Naive thymus-derived CD4-positive, alpha-beta T cell (primary cell): ENCODE measurements at regions of chr1 and their contacts with region 1.

Region 1: GRCh38 chr1:157490467-157491165 is 61.7 kb downstream of the FCRL5 start:
- DNase-seq: peak in 5 of 9 donors; percentile 18 to 63 (median 31)
- ATAC-seq: peak; percentile 56
- H3K4me3 ChIP-seq: no peak overlapping the region
- H3K4me3 Mint-ChIP-seq: no peak overlapping the region
- H3K27ac ChIP-seq: no peak overlapping the region
- H3K27ac Mint-ChIP-seq: no peak overlapping the region
- H3K4me1 ChIP-seq: no peaks in the 10 kb centered on the region
- H3K4me1 Mint-ChIP-seq: no peaks in the 10 kb centered on the region
- H3K27me3 ChIP-seq: no peaks in the 10 kb centered on the region
- H3K27me3 Mint-ChIP-seq: peaks cover 5 to 34% (median 16%) of the 10 kb centered on the region in 5 donors

Region 2: DNA sequence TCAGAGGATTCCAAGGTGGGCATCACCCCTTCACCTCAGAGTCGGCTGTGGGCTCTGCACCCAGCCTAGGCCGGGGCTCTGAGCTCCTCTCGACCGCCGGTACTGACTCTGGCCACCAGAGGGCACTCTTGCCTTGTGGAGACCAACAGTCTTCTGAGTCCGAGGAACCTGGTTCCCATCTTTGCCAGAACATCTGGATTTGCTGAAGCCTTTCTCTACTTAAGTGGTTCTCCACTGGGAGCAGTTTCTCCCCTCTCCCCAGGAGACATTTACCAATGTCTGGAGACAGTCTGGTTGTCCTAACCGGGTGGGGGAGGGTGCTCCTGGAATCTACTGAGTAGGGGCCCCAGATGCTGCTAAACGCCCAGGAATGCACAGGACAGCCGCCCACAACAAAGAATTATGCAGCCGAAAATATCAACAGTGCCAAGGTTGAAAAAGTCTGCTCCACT is 400.4 kb before region 1 on chr1:
- CTCF ChIA-PET with region 1: no interaction called
- POLR2A ChIA-PET with region 1: no interaction called
- intact Hi-C with region 1: loop called in 1 of 2 experiments (anchors 10 kb)
- DNase-seq: peak; percentile 64 to 88 (median 81)
- ATAC-seq: peak; percentile 91
- H3K4me3 ChIP-seq: no peak overlapping the region
- H3K4me3 Mint-ChIP-seq: no peak overlapping the region
- H3K27ac ChIP-seq: no peak overlapping the region
- H3K27ac Mint-ChIP-seq: no peak overlapping the region
- H3K4me1 ChIP-seq: peaks cover 0 to 4% of the 10 kb centered on the region in 2 donors
- H3K4me1 Mint-ChIP-seq: peaks cover 0 to 8% (median 0%) of the 10 kb centered on the region in 7 donors
- H3K27me3 ChIP-seq: no peaks in the 10 kb centered on the region
- H3K27me3 Mint-ChIP-seq: peaks cover 0 to 11% (median 0%) of the 10 kb centered on the region in 5 donors

Region 3: GRCh38 chr1:157163273-157164127 is 327.1 kb before region 1 on chr1:
- CTCF ChIA-PET with region 1: no interaction called
- POLR2A ChIA-PET with region 1: no interaction called
- intact Hi-C with region 1: loop called in 1 of 2 experiments (anchors 2 kb)
- DNase-seq: peak; percentile 38 to 77 (median 60)
- ATAC-seq: peak; percentile 78
- H3K4me3 ChIP-seq: no peak overlapping the region
- H3K4me3 Mint-ChIP-seq: peak overlapping the region in 6 of 10 donors; percentile 4 to 54 (median 42)
- H3K27ac ChIP-seq: no peak overlapping the region
- H3K27ac Mint-ChIP-seq: peak overlapping the region in 1 of 9 donors; percentile 56
- H3K4me1 ChIP-seq: no peaks in the 10 kb centered on the region
- H3K4me1 Mint-ChIP-seq: peaks cover 4 to 9% (median 5%) of the 10 kb centered on the region in 7 donors
- H3K27me3 ChIP-seq: no peaks in the 10 kb centered on the region
- H3K27me3 Mint-ChIP-seq: peaks cover 5 to 12% (median 11%) of the 10 kb centered on the region in 5 donors

Region 4: DNA sequence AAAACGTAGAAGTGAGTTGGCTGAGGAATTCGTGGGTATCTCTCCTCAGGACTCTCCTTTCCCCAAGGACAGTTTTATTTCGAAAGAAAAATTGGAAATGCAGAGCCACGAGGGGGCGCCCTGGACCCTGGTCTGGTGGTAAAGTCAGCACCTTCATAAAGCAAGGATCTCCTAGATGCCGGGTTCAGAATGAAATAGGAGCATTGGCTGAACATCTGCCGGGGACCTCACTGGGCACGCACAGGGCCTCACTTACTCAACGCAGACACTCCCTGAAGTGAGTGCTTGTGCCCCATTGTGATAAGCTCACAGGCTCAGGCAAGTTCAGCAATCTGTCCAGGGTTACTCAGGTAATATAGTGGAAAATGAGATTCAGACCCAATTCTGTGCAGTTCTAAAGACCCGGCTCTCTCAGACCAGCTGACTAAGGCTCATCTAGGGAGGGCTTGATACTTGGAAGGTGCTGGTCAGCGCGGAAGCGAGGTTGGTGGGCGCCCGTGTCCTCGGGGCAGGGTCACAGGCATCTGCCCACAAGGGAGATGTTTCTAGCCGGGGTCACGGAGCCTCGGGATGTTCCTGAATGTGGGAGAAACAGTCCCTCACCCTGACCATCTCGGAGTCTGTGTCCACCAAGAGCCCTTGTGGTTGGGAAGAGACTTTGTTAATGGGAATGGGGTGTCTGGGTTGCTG is 296.8 kb before region 1 on chr1:
- CTCF ChIA-PET with region 1: no interaction called
- POLR2A ChIA-PET with region 1: no interaction called
- intact Hi-C with region 1: loop called (anchors 1 kb)
- DNase-seq: peak in 5 of 9 donors; percentile 9 to 60 (median 22)
- ATAC-seq: no peak
- H3K4me3 ChIP-seq: no peak overlapping the region
- H3K4me3 Mint-ChIP-seq: no peak overlapping the region
- H3K27ac ChIP-seq: no peak overlapping the region
- H3K27ac Mint-ChIP-seq: no peak overlapping the region
- H3K4me1 ChIP-seq: no peaks in the 10 kb centered on the region
- H3K4me1 Mint-ChIP-seq: peaks cover 0 to 12% (median 11%) of the 10 kb centered on the region in 7 donors
- H3K27me3 ChIP-seq: peaks cover 0 to 3% of the 10 kb centered on the region in 2 donors
- H3K27me3 Mint-ChIP-seq: peaks cover 35 to 52% (median 42%) of the 10 kb centered on the region in 5 donors

Region 5: GRCh38 chr1:157369808-157370521 is 120.7 kb before region 1 on chr1:
- CTCF ChIA-PET with region 1: no interaction called
- POLR2A ChIA-PET with region 1: no interaction called
- intact Hi-C with region 1: loop called (anchors 1 kb)
- DNase-seq: peak in 5 of 9 donors; percentile 14 to 34 (median 29)
- ATAC-seq: peak; percentile 76
- H3K4me3 ChIP-seq: no peak overlapping the region
- H3K4me3 Mint-ChIP-seq: no peak overlapping the region
- H3K27ac ChIP-seq: no peak overlapping the region
- H3K27ac Mint-ChIP-seq: no peak overlapping the region
- H3K4me1 ChIP-seq: no peaks in the 10 kb centered on the region
- H3K4me1 Mint-ChIP-seq: no peaks in the 10 kb centered on the region
- H3K27me3 ChIP-seq: no peaks in the 10 kb centered on the region
- H3K27me3 Mint-ChIP-seq: peaks cover 15 to 24% (median 21%) of the 10 kb centered on the region in 5 donors